ENCODE measurements at regions of chr11 and their contacts with region 1.

Region 1: GRCh38 chr11:27485930-27486773 is 13.6 kb upstream of the LGR4 start:
- DNase-seq: peak; percentile 37
- ATAC-seq: peak; percentile 73
- H3K4me3 ChIP-seq: no peak overlapping the region
- H3K27ac ChIP-seq: no peak overlapping the region
- H3K4me1 ChIP-seq: no peaks in the 10 kb centered on the region
- H3K27me3 ChIP-seq: no peaks in the 10 kb centered on the region
- CTCF ChIP-seq: peak; percentile 82 to 92 (median 87)
- POLR2A ChIP-seq: no peak
- RAD21 ChIP-seq: peak; percentile 90

Region 2: DNA sequence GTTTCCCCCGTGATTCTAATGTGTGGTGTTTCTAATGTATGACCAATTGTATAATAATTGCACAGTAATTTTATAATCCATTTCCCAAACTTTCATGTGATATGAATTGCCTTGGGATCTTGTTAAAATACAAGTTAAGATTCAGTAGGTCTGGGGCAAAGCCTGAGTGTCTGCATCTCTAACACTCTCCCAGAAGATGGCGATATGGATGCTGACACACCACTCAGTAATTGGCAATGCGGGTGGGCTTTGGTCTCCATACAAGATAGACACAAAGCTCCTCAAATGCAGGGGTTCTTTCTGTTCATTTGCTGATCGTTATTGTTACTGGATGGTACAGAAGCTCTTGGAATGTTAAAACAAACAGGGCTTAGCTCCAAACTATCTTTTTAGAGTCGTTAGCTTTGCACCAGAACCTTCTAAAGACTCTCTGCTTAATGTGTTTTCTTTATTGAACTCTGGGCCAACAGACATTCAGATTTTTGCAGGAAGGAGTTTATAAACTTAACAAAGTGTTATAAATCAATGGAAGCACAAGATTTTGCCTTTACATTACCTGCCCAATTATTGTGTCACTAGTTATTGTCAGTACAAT is 1199.6 kb before region 1 on chr11:
- CTCF ChIA-PET with region 1: no interaction called
- POLR2A ChIA-PET with region 1: no interaction called
- RAD21 ChIA-PET with region 1: no interaction called
- intact Hi-C with region 1: loop called (anchors 5 kb)
- DNase-seq: no peak
- ATAC-seq: no peak
- H3K4me3 ChIP-seq: no peak overlapping the region
- H3K27ac ChIP-seq: no peak overlapping the region
- H3K4me1 ChIP-seq: no peaks in the 10 kb centered on the region
- H3K27me3 ChIP-seq: no peaks in the 10 kb centered on the region
- CTCF ChIP-seq: peak; percentile 3 to 38 (median 28); a peak in 3 of 6 replicates
- POLR2A ChIP-seq: no peak
- RAD21 ChIP-seq: no peak

Region 3: DNA sequence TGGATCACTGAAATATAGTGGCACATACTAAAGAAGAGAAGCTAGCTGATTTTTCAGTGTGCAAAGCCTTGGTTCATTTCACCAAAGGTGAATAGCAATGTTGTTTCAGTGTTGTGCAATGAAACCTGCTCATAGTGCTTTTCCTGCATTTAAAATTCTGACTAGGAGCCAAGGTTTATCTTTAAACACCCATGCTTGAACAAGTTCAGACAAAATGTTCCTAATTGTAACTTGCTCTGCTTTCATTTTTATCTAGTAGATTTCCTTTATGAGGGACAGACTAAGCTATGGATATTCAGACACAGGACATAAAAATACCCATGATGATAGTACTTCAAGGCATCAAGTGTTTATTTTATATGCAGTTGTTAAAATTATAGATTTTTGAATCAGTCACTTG is 397.8 kb before region 1 on chr11:
- CTCF ChIA-PET with region 1: no interaction called
- POLR2A ChIA-PET with region 1: no interaction called
- RAD21 ChIA-PET with region 1: no interaction called
- intact Hi-C with region 1: no loop called
- DNase-seq: no peak
- ATAC-seq: no peak
- H3K4me3 ChIP-seq: no peak overlapping the region
- H3K27ac ChIP-seq: no peak overlapping the region
- H3K4me1 ChIP-seq: no peaks in the 10 kb centered on the region
- H3K27me3 ChIP-seq: no peaks in the 10 kb centered on the region
- CTCF ChIP-seq: no peak
- POLR2A ChIP-seq: no peak
- RAD21 ChIP-seq: no peak

Region 4: GRCh38 chr11:27183672-27184457 is 302.3 kb before region 1 on chr11:
- CTCF ChIA-PET with region 1: interaction called, 88 read pairs
- POLR2A ChIA-PET with region 1: interaction called, 3 read pairs
- RAD21 ChIA-PET with region 1: interaction called in 1 of 2 experiments, 9 read pairs
- intact Hi-C with region 1: loop called (anchors 1 kb)
- DNase-seq: peak; percentile 51
- ATAC-seq: 0 out of 2 replicates have a peak, but pooled peaks have one; percentile 49
- H3K4me3 ChIP-seq: no peak overlapping the region
- H3K27ac ChIP-seq: no peak overlapping the region
- H3K4me1 ChIP-seq: no peaks in the 10 kb centered on the region
- H3K27me3 ChIP-seq: peaks cover 16% of the 10 kb centered on the region
- CTCF ChIP-seq: peak; percentile 52 to 66 (median 64); a peak in 5 of 6 replicates
- POLR2A ChIP-seq: no peak
- RAD21 ChIP-seq: peak; percentile 78

Region 5: DNA sequence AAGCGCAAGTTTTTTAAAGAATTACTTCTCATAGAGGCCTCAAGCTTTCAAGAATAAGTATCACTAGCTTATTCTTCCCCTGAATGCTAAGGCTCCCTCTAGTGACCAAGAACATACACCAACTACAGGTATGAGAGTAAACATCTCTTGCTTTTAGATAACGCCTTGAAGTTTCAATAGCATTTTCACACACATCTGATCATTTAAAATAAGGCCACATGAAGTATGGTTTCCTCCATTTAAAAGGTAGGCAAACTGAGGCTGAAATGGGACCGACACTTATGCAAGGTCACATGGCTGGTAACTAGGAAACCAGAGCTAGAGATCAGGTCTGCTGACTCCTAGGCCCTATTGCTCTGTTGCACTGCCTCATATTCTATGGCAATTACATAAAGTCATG is 189.7 kb before region 1 on chr11:
- CTCF ChIA-PET with region 1: interaction called, 11 read pairs
- POLR2A ChIA-PET with region 1: no interaction called
- RAD21 ChIA-PET with region 1: interaction called in 1 of 2 experiments, 4 read pairs
- intact Hi-C with region 1: loop called (anchors 10 kb)
- DNase-seq: peak; percentile 27
- ATAC-seq: peak; percentile 84
- H3K4me3 ChIP-seq: no peak overlapping the region
- H3K27ac ChIP-seq: no peak overlapping the region
- H3K4me1 ChIP-seq: no peaks in the 10 kb centered on the region
- H3K27me3 ChIP-seq: no peaks in the 10 kb centered on the region
- CTCF ChIP-seq: peak; percentile 37 to 72 (median 72); a peak in 5 of 6 replicates
- POLR2A ChIP-seq: no peak
- RAD21 ChIP-seq: peak; percentile 52

Region 6: GRCh38 chr11:27497284-27497866 is 11.2 kb after region 1 on chr11:
- CTCF ChIA-PET with region 1: interaction called, 18 read pairs
- POLR2A ChIA-PET with region 1: no interaction called
- RAD21 ChIA-PET with region 1: no interaction called
- intact Hi-C with region 1: no loop called
- DNase-seq: no peak
- ATAC-seq: no peak
- H3K4me3 ChIP-seq: no peak overlapping the region
- H3K27ac ChIP-seq: no peak overlapping the region
- H3K4me1 ChIP-seq: no peaks in the 10 kb centered on the region
- H3K27me3 ChIP-seq: no peaks in the 10 kb centered on the region
- CTCF ChIP-seq: peak; percentile 16 to 60 (median 30); a peak in 4 of 6 replicates
- POLR2A ChIP-seq: no peak
- RAD21 ChIP-seq: 0 out of 2 replicates have a peak, but pooled peaks have one; percentile 24

Measured in HCT116 (cell line).